ENCODE measurements at regions of chr10 and their contacts with region 1.

Region 1: DNA sequence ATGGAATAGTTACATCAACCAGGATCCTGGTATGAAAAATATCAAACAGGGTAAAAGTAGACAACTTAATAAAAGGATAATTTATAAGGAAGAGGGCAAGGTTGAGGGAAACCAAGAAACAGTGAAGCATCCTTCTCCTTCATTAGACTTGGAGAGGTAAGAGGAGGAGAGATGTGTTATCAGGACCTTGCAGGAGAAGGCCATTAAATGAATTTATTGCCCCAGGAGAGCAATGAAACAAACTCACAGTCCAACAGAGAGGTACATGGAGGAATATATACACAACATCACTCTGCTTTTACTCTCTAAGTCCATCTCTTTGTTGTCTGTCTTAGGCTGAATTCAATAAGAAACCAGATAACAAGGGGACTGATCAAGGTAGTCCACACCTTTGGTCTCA is 966.2 kb downstream of the SORCS1 start:
- DNase-seq: no peak
- ATAC-seq: no peak
- H3K4me3 ChIP-seq: no peak overlapping the region
- H3K27ac ChIP-seq: no peak overlapping the region
- H3K4me1 ChIP-seq: no peaks in the 10 kb centered on the region
- H3K27me3 ChIP-seq: no peaks in the 10 kb centered on the region
- CTCF ChIP-seq: no peak
- POLR2A ChIP-seq: no peak

Region 2: GRCh38 chr10:106078895-106079576 is 119.2 kb before region 1 on chr10:
- intact Hi-C with region 1: no loop called
- DNase-seq: no peak
- ATAC-seq: no peak
- H3K4me3 ChIP-seq: no peak overlapping the region
- H3K27ac ChIP-seq: no peak overlapping the region
- H3K4me1 ChIP-seq: no peaks in the 10 kb centered on the region
- H3K27me3 ChIP-seq: no peaks in the 10 kb centered on the region
- CTCF ChIP-seq: no peak
- POLR2A ChIP-seq: no peak

Region 3: DNA sequence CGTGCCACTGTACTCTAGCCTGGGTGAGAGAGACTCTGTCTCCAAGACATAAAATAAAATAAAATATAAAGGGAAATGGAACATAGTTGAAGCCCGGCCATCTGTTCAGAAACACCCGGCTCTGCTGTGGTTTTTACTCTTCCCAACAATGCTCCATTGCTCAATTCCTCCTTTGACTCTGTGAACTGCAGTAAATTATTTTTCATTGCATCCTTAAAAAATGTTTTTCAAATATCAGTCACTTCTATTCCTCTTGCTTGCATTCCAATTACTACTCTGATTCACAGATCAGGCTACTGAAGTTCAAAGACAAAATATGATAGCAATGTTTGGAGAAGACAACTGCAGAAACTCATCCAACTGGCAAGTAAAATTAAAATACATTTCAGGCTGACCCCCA is 16.8 kb before region 1 on chr10:
- intact Hi-C with region 1: loop called in 1 of 10 experiments (anchors 2 kb)
- DNase-seq: no peak
- ATAC-seq: no peak
- H3K4me3 ChIP-seq: no peak overlapping the region
- H3K27ac ChIP-seq: no peak overlapping the region
- H3K4me1 ChIP-seq: no peaks in the 10 kb centered on the region
- H3K27me3 ChIP-seq: peaks cover 0 to 3% (median 0%) of the 10 kb centered on the region in 9 donors
- CTCF ChIP-seq: no peak
- POLR2A ChIP-seq: no peak